Sciatic nerve (tissue), 2 donors: ENCODE measurements at regions of chr2 and their contacts with region 1.

Region 1: GRCh38 chr2:200901459-200902072 is 12.4 kb downstream of the NIF3L1 start:
- DNase-seq: no peak
- ATAC-seq: peak; percentile 88

Region 2: DNA sequence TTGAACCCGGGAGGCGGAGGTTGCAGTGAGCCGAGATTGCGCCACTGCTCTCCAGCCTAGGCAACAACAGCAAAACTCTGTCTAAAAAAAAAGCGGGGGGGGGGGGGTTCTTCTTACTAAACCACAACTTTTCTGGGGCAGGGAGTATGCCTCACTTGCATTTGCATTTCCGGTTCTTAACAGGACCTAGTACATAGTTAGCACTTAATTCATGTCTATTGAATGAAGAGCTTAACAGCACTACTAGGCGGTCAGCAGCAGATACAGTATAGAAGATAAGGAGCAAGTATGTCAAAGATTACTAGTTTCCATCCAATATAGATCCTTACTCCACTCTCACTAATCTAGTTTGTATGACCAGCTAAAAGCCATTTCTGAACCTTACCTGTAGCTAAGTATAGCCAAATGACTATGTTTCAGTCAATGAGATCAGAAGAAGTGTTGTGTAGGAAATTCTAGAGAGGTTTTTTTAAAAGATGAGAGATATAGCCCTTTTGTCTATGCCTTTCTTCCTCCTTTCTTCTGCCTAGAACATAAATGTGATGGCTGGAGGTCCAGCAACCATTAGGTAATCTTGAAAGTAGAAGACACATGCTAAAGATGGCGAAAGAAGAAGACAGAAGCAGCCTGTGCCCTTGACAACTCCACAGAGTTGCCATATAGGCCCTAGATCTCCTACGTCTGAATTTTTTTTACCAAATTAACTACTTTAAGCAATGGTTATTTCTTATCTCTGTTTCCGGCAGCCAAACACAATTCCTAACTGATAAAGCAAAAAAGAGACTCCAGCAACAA is 158.6 kb after region 1 on chr2:
- intact Hi-C with region 1: loop called (anchors 10 kb)
- DNase-seq: no peak
- ATAC-seq: no peak

Region 3: GRCh38 chr2:201171259-201171814 is 269.8 kb after region 1 on chr2:
- intact Hi-C with region 1: loop called (anchors 10 kb)
- DNase-seq: no peak
- ATAC-seq: no peak